Body of pancreas (tissue), 4 donors: ENCODE measurements at regions of chr16 and their contacts with region 1.

Region 1: GRCh38 chr16:49844359-49844758 is 11.6 kb downstream of the ZNF423 start:
- DNase-seq: no peak
- ATAC-seq: no peak
- H3K4me3 ChIP-seq: no peak overlapping the region
- H3K27ac ChIP-seq: no peak overlapping the region
- H3K4me1 ChIP-seq: no peaks in the 10 kb centered on the region
- H3K27me3 ChIP-seq: no peaks in the 10 kb centered on the region
- CTCF ChIP-seq: no peak
- POLR2A ChIP-seq: no peak

Region 2: DNA sequence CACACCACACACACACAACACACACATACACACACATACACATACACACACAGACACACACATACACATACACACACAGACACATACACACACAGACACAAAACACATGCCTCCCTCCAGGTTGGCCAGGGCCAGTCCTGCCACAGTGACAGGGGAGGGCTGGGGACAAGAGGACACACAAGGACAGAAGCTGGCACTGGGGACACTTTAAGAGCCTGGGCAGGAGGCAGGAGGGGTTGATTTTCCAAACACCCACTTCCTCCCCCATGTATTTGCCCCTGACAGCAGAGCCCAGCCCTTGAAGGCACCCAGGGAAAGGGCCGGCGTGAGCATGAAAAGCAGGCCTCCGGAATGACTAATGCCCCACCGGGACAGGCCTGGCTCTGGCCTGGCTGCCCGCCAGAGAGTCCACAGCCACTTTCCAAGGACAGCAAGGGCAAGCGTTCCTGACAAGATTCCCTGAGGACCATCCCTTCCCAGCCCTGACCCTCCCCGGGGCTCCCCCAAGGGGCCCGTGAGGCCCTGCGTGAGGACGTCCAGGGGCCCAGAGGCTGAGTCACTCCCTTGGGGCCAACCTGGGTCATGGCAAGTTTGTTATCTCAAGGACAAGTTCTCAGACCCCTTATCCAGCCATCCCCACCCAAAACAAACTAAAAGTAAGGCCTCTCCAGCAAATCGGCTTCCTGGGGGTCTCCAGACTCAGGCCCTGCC is 224.0 kb before region 1 on chr16:
- intact Hi-C with region 1: no loop called
- DNase-seq: peak; percentile 59 to 84 (median 74)
- ATAC-seq: peak; percentile 72
- H3K4me3 ChIP-seq: no peak overlapping the region
- H3K27ac ChIP-seq: peak overlapping the region in 2 of 4 donors; percentile 29 to 41
- H3K4me1 ChIP-seq: peaks cover 20% of the 10 kb centered on the region
- H3K27me3 ChIP-seq: no peaks in the 10 kb centered on the region
- CTCF ChIP-seq: no peak
- POLR2A ChIP-seq: no peak

Region 3: GRCh38 chr16:49755313-49755620 is 89.1 kb before region 1 on chr16:
- intact Hi-C with region 1: loop called (anchors 10 kb)
- DNase-seq: no peak
- ATAC-seq: peak; percentile 57
- H3K4me3 ChIP-seq: no peak overlapping the region
- H3K27ac ChIP-seq: peak overlapping the region in 1 of 4 donors; percentile 60
- H3K4me1 ChIP-seq: peaks cover 5% of the 10 kb centered on the region
- H3K27me3 ChIP-seq: no peaks in the 10 kb centered on the region
- CTCF ChIP-seq: peak in 4 of 7 experiments; percentile 21 to 37 (median 28)
- POLR2A ChIP-seq: no peak

Region 4: DNA sequence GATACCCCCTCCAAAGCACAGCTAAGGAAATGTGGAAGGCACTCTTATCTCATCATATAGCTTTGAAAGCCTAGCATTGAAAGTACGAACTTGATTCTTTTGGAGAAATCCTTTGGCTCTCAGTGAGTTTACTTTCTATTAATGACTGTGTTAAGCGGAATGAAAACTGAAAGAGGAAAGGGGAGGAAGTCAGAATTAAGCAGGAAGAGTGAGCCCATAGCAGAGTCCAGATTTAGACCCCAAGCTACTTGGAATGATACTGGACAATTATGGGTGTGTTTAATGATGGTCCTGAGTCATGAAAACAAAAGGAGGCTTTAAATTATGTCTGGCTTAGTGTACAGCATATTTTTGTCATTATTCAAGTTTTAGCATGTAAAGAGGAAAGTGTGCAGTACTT is 350.9 kb after region 1 on chr16:
- intact Hi-C with region 1: no loop called
- DNase-seq: no peak
- ATAC-seq: no peak
- H3K4me3 ChIP-seq: no peak overlapping the region
- H3K27ac ChIP-seq: no peak overlapping the region
- H3K4me1 ChIP-seq: peaks cover 10% of the 10 kb centered on the region
- H3K27me3 ChIP-seq: no peaks in the 10 kb centered on the region
- CTCF ChIP-seq: no peak
- POLR2A ChIP-seq: no peak